ENCODE measurements at regions of chr17 and their contacts with region 1.

Region 1: DNA sequence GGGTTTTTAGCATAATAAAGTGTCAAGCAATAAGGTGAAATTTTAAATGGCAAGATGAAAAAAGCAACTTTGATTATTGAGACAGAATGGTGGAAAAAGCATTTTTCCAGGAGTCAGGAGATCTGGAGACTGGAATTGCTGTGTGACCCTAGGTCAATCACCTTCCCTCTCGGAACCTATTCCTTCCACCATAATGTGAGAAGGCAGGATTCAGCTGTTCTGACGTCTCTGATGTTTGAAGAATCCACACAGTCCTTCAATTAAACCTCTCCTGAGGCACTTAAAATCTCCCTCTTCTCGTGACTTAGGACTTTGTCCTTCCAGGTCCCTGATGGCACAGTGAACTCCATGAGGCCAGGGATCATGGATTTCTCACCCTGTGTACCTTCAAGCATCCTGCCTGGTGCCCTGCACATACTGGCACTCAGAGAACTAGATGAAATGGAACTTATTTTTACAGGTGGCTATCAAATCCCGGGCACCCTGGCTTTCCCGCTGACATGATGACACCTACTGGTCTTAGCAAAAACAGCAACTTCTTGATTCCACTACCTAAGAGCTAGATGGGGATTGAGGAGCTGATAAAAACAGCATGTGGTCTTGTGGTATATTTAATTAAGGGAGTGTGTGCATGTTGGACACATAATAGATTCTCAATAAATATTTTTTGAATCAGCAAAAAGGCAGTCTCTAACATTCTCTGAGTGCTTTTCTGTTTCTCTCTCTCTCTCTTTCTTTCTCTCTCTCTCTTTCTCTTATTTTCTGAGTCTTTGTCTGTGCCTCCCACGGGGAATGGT is 2.3 kb upstream of the CCDC182 start:
- DNase-seq: peak in 7 of 10 donors; percentile 35 to 91 (median 52)

Region 2: GRCh38 chr17:57130761-57131461 is 616.5 kb before region 1 on chr17:
- intact Hi-C with region 1: loop called (anchors 1 kb)
- DNase-seq: peak; percentile 70 to 96 (median 86)

Region 3: GRCh38 chr17:57243171-57243948 is 504.1 kb before region 1 on chr17:
- intact Hi-C with region 1: loop called (anchors 10 kb)
- DNase-seq: peak in 7 of 10 donors; percentile 31 to 84 (median 68)

Region 4: GRCh38 chr17:57597531-57598453 is 149.6 kb before region 1 on chr17:
- intact Hi-C with region 1: loop called (anchors 5 kb)
- DNase-seq: peak in 9 of 10 donors; percentile 51 to 96 (median 78)

Region 5: GRCh38 chr17:57685505-57686132 is 61.8 kb before region 1 on chr17:
- intact Hi-C with region 1: no loop called
- DNase-seq: peak in 1 of 10 donors; percentile 33

Measured in posterior cingulate gyrus (tissue), 11 donors.